MCF 10A (cell line): ENCODE measurements at regions of chr3 and their contacts with region 1.

Region 1: DNA sequence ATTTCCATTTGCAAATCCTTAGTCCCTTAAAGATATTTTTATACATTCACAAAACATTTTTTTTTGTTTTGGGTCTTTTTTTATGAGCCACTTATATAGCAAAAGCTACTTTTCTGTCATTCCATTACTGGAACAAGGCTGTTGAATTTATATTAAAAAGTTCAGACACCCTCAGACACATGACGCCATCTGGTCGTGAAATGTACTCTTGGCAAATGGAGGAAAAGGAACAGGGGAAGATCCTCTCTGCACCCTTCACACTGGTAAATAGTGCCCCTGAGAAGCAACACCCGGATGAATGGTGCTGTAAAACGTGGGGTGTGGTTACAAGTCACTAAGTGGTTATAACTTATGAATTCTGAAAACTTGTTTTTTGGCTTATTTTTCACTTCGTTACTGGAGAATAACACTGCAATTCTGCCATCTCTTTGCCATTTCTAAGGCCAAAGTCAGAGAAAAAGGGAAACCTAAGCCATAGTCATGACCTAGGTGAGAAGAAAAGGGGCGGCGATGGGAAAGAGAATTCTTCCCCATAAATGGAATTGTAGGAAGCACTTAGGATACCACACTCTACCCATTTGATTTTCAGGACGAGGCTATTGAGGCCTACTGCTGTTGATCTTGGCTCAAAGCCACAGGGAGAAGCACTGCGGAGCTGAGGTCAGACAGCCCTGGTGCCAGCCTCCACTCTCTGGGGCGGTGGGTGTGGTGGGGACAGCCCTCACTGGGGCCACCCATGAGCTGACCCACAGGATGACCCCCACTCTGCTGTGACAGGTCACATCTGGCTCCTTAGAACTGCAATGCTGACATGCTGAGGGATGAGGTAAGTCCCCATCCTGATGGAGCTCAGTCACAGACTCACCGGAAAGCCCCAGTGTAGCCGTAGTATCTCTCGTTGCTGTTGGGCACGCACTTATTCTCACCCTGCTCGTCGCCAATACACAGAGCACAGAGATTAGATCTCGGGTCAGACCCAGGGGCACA is 21.8 kb downstream of the LTF start:
- DNase-seq: peak; percentile 64
- H3K4me3 Mint-ChIP-seq: no peak overlapping the region
- H3K27ac Mint-ChIP-seq: no peak overlapping the region
- H3K4me1 Mint-ChIP-seq: no peaks in the 10 kb centered on the region
- H3K27me3 Mint-ChIP-seq: peaks cover 12% of the 10 kb centered on the region
- CTCF ChIP-seq: peak; percentile 44

Region 2: DNA sequence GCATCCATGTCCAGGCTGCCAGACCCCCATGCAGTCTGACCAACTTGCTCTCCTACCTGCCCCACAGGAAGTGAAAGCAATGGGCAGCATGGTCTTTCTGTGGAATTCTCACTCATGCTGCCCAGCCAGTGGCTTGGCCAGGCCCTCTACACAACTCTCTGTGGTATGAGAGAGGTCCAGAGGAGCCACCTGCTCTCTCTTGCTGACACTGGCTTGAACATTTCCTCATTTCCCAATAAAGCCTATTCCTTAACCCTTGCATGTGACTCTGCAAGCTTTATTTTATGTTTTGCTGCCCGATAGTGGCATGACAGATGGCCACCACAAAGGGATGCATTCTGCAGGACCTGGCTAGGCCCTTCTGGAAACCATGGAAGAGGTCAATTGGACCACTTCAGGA is 288.6 kb before region 1 on chr3:
- CTCF ChIA-PET with region 1: no interaction called
- POLR2A ChIA-PET with region 1: no interaction called
- intact Hi-C with region 1: no loop called
- DNase-seq: no peak
- H3K4me3 Mint-ChIP-seq: no peak overlapping the region
- H3K27ac Mint-ChIP-seq: no peak overlapping the region
- H3K4me1 Mint-ChIP-seq: no peaks in the 10 kb centered on the region
- H3K27me3 Mint-ChIP-seq: no peaks in the 10 kb centered on the region
- CTCF ChIP-seq: no peak

Region 3: DNA sequence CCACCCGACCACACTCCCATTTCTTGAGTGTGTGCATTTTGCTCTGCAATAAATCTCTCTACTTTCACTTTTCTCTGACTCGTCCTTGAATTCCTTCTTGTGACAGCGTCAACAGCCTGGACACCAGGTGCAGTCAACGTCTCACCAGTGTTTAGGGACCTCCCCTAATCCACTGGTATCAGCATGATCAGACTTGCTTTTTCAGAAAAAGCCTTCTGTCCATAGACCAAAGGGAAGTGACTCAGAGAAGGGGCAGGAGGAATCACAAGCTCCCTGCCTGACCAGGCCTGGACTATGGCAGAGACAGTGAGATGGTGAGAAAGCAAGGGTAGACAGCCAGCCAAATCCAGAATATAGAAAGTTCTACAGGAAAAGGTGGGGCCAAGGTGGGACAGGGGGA is 56.7 kb before region 1 on chr3:
- CTCF ChIA-PET with region 1: interaction called, 4 read pairs
- POLR2A ChIA-PET with region 1: interaction called, 3 read pairs
- intact Hi-C with region 1: loop called (anchors 2 kb)
- DNase-seq: peak; percentile 93
- H3K4me3 Mint-ChIP-seq: peak overlapping the region; percentile 57
- H3K27ac Mint-ChIP-seq: no peak overlapping the region
- H3K4me1 Mint-ChIP-seq: peaks cover 14% of the 10 kb centered on the region
- H3K27me3 Mint-ChIP-seq: no peaks in the 10 kb centered on the region
- CTCF ChIP-seq: no peak

Region 4: DNA sequence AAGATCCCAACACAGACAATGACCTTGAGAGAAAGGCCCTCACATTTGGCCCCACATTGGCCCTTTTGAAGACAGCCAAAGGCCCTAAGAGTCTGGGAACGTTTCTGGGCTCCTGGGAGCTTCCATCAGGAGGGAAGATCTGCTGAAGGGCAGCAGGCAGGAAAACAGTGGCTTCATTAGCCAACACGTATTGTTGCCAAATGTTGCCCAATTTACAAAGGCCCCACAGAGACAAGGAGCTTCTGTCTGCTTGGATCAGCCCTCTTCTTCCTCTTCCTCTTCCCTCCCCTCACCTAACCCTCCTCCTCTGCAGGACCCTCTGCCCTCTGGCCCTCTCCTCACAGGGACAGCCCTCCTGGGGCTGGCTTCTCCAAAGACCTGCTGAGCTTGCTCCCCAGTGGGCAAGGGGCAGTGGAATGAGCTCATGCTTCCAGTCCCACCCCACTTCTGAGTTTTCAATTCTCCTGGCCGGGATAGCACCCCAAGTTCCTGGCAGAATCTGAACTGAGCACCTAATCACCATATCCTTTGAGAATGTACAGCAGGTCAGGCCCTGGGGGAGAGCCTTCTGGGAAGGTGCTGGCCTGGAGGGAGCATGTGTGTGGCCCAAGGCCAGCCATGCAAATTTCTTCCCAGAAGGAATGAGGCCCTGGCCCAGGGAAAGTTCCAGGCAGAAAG is 26.9 kb after region 1 on chr3:
- CTCF ChIA-PET with region 1: no interaction called
- POLR2A ChIA-PET with region 1: no interaction called
- intact Hi-C with region 1: no loop called
- DNase-seq: no peak
- H3K4me3 Mint-ChIP-seq: no peak overlapping the region
- H3K27ac Mint-ChIP-seq: no peak overlapping the region
- H3K4me1 Mint-ChIP-seq: no peaks in the 10 kb centered on the region
- H3K27me3 Mint-ChIP-seq: peaks cover 53% of the 10 kb centered on the region
- CTCF ChIP-seq: no peak